ENCODE measurements at regions of chr1 and their contacts with region 1.

Region 1: DNA sequence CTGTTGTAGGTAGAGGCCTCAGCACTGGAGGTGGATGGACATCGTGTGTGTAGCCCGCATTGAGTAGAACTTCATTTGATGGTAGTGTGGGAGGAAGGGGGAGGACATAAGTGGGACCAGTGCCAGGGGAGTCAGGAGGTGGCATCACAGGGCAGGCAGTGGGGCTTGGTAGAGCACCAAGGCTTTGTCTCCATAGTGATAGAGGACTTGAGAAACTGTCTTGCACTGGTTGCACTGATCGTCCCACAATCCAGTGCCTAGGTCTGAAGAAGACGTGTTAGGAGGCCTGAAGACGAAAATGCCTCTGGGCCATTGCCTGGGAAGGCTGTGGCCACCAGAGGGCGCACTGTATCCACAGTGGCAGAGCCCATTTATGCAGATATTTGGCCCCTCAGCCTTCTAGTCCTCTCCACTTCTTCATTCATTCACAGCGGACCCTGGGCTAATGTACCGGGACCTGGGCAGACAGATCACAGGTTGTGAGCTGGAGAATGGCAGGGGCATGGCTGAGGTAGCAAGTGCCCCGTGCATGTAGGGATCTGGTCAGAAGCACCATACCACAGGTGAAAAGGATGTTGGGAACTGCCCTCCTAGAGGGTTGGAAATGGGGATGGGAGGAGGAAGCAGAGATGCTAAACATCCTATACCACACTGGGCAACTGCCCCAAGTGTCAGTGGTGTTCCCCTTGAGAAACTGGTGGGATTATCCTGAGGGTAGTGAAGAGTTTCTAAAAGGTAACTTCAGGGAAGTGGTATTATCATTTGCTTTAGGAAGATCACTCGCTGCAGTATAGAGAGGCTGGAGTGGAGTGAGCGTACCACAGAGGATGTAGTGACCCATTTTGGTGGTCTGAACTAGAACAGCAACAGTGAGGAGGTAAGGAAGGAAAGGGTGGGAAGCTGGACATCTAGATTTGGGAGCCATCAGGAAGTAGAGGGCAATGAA is 95.3 kb downstream of the PIK3R3 start:
- DNase-seq: peak; percentile 62 to 85
- ATAC-seq: peak; percentile 60 to 63
- H3K4me3 ChIP-seq: no peak overlapping the region
- H3K27ac ChIP-seq: peak overlapping the region; percentile 62 to 79 (median 74)
- H3K4me1 ChIP-seq: peaks cover 40 to 53% of the 10 kb centered on the region in 2 donors
- H3K27me3 ChIP-seq: no peaks in the 10 kb centered on the region
- CTCF ChIP-seq: peak; percentile 95 to 97 (median 97)
- POLR2A ChIP-seq: no peak

Region 2: DNA sequence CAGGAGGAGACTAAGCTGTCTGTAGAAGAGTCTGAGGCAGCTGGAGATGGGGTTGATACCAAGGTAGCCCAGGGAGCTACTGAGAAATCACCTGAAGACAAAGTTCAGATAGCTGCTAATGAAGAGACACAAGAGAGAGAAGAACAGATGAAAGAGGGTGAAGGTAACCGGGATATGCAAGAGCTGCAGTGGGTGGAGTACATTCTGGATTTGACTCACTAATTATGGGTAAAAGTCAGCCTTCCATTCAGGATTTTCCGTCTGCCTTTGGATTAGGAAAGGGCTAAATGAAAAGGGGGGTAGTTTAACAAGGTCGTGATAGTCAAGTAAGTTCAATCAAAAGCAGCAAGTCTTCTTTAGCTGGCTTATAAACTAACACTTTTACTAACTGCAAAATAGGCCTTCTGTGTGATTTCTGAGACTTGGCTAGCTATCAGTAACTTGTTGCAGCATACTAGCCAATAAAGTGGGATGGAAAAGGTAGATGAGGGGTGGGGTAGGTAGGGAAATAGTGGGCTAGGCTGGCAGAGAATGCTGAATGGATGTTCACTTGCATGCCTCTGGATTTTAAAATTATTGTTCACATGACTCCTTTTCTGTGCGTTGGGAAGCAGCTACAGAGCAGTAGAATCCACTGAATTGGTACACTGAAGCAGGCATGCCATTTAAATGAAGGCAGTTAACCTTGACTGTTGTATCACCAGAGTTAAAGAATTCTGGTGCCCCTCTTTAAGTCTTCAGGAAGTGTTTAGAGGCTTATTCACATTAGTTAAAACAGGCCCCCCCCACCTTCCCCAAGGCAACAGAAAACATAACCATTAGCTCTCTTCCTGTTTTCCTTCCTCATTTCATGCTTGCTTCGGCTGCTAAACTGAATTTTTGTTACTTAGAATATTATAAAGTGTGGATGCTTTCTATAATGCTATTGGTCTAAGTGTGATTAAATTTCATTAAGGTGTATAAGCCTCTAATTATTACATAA is 428.7 kb before region 1 on chr1:
- in situ Hi-C with region 1: no loop called
- intact Hi-C with region 1: no loop called
- DNase-seq: no peak
- ATAC-seq: no peak
- H3K4me3 ChIP-seq: no peak overlapping the region
- H3K27ac ChIP-seq: no peak overlapping the region
- H3K4me1 ChIP-seq: no peaks in the 10 kb centered on the region
- H3K27me3 ChIP-seq: no peaks in the 10 kb centered on the region
- CTCF ChIP-seq: no peak
- POLR2A ChIP-seq: no peak

Region 3: GRCh38 chr1:46223472-46223943 is 186.3 kb after region 1 on chr1:
- in situ Hi-C with region 1: loop called in 1 of 4 experiments (anchors 10 kb)
- intact Hi-C with region 1: loop called (anchors 1 kb)
- DNase-seq: peak; percentile 40 to 63
- ATAC-seq: peak; percentile 95 to 97
- H3K4me3 ChIP-seq: no peak overlapping the region
- H3K27ac ChIP-seq: no peak overlapping the region
- H3K4me1 ChIP-seq: no peaks in the 10 kb centered on the region
- H3K27me3 ChIP-seq: no peaks in the 10 kb centered on the region
- CTCF ChIP-seq: peak; percentile 82 to 95 (median 85)
- POLR2A ChIP-seq: no peak

Measured in gastrocnemius medialis (tissue), 4 donors.